ENCODE measurements at regions of chr15 and their contacts with region 1.

Region 1: DNA sequence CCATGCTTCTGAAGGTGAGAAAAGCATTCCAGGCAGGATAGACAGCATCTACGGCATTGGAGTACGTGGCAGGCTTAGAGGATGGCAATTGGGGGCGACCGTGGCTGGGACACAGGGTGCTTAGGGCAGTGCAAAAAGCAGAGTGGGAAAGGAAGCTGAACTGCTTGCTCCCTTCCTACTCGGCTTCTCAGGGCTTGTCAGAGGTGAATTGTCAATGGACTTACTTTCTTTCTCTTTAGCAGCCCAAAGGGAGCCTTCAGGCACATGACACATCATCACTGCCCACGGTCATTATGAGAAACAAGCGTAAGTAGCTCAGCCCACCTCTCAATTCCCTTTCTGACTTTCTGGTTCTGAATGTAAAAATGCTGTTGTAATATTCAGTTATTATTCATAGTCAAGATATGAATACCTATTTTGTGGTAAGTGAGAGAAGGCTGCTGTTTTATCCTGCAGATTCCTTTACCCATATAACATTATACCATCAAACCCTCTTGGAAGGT is 84.3 kb downstream of the KLHL25 start:
- DNase-seq: no peak
- H3K4me3 Mint-ChIP-seq: no peak overlapping the region
- H3K27ac Mint-ChIP-seq: no peak overlapping the region
- H3K4me1 Mint-ChIP-seq: peaks cover 4% of the 10 kb centered on the region
- H3K27me3 Mint-ChIP-seq: no peaks in the 10 kb centered on the region
- CTCF ChIP-seq: no peak

Region 2: DNA sequence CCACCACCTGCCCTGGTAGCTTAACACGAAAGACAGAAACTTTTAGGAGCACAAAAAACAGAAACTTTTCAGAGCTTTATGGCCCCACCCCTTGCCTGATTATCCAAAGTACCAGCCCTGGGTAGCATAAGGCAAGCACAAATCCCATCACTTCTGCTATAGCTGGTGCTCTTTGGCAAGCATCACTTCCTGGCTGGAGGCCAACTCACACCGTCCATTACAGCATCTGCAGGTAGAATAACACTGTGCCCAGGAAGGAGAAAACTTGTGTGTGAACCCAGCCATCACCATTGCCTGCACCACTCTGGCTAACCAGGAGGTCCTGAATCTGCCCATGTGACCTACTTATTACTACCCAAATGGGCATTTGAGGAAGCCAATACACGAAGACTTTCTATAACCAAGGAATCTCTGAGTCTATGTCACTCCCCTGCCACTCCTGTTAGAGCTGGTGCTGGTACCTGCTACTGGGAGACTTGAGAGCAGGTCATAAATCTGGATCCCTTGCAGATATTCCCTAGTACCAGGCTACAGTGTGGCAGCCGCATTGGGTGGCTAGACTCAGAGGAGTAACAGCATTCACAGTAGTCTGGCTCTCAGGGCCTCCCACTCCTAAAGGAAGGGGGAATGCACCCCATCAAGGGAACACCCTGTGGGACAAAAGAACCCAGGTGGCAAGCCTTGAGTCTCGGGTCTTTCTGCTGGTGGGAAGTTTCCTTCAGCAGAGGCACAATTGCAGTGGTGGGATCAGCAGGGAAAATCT is 403.3 kb before region 1 on chr15:
- CTCF ChIA-PET with region 1: no interaction called
- POLR2A ChIA-PET with region 1: no interaction called
- intact Hi-C with region 1: loop called (anchors 10 kb)
- DNase-seq: peak; percentile 39
- H3K4me3 Mint-ChIP-seq: no peak overlapping the region
- H3K27ac Mint-ChIP-seq: no peak overlapping the region
- H3K4me1 Mint-ChIP-seq: no peaks in the 10 kb centered on the region
- H3K27me3 Mint-ChIP-seq: no peaks in the 10 kb centered on the region
- CTCF ChIP-seq: no peak

Region 3: GRCh38 chr15:85582131-85583079 is 128.0 kb before region 1 on chr15:
- CTCF ChIA-PET with region 1: no interaction called
- POLR2A ChIA-PET with region 1: no interaction called
- intact Hi-C with region 1: no loop called
- DNase-seq: no peak
- H3K4me3 Mint-ChIP-seq: peak overlapping the region; percentile 22
- H3K27ac Mint-ChIP-seq: peak overlapping the region; percentile 69
- H3K4me1 Mint-ChIP-seq: peaks cover 48% of the 10 kb centered on the region
- H3K27me3 Mint-ChIP-seq: no peaks in the 10 kb centered on the region
- CTCF ChIP-seq: no peak

Measured in MCF 10A (cell line).